ENCODE measurements at regions of chr1 and their contacts with region 1.

Region 1: GRCh38 chr1:45512641-45513054 is 9.0 kb downstream of the PRDX1 start:
- DNase-seq: no peak
- ATAC-seq: peak; percentile 86
- H3K4me3 ChIP-seq: no peak overlapping the region
- H3K27ac ChIP-seq: no peak overlapping the region
- H3K4me1 ChIP-seq: no peaks in the 10 kb centered on the region
- H3K27me3 ChIP-seq: no peaks in the 10 kb centered on the region
- CTCF ChIP-seq: peak; percentile 74 to 80 (median 75)
- EP300 ChIP-seq: no peak
- POLR2A ChIP-seq: no peak
- RAD21 ChIP-seq: peak; percentile 82

Region 2: GRCh38 chr1:45455162-45455561 is 57.5 kb before region 1 on chr1:
- CTCF ChIA-PET with region 1: no interaction called
- POLR2A ChIA-PET with region 1: no interaction called
- RAD21 ChIA-PET with region 1: no interaction called
- SMC1A ChIA-PET with region 1: no interaction called
- in situ Hi-C with region 1: no loop called
- intact Hi-C with region 1: no loop called
- DNase-seq: no peak
- ATAC-seq: no peak
- H3K4me3 ChIP-seq: no peak overlapping the region
- H3K27ac ChIP-seq: no peak overlapping the region
- H3K4me1 ChIP-seq: peaks cover 4% of the 10 kb centered on the region; the same call in 1 of the 2 replicates
- H3K27me3 ChIP-seq: no peaks in the 10 kb centered on the region
- CTCF ChIP-seq: no peak
- EP300 ChIP-seq: no peak
- POLR2A ChIP-seq: no peak
- RAD21 ChIP-seq: no peak

Region 3: DNA sequence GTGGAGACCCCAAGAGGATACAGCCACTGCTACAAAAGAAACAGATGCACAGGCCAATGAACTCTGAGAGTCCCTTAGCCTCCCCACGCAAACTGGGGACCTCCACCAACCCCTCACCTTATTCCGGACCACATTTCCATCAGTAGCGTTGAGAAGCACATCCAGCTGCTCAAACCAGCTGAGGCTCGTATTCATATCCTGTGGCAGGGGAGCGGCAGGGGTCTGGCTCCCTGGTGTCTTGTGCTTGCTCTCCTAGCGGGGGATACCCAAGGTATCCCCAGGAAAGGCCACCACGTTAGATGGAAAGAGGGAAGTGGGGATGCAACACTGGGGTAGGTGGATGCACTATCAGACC is 13.3 kb before region 1 on chr1:
- CTCF ChIA-PET with region 1: interaction called, 33 read pairs
- POLR2A ChIA-PET with region 1: interaction called, 11 read pairs
- RAD21 ChIA-PET with region 1: interaction called, 42 read pairs
- SMC1A ChIA-PET with region 1: interaction called, 32 read pairs
- in situ Hi-C with region 1: no loop called
- intact Hi-C with region 1: no loop called
- DNase-seq: no peak
- ATAC-seq: no peak; the same call in 2 of the 3 replicates
- H3K4me3 ChIP-seq: peak overlapping the region; percentile 93
- H3K27ac ChIP-seq: peak overlapping the region; percentile 54
- H3K4me1 ChIP-seq: peaks cover 15% of the 10 kb centered on the region
- H3K27me3 ChIP-seq: no peaks in the 10 kb centered on the region
- CTCF ChIP-seq: no peak
- EP300 ChIP-seq: no peak
- POLR2A ChIP-seq: no peak
- RAD21 ChIP-seq: no peak

Region 4: GRCh38 chr1:45550401-45551351 is 38.0 kb after region 1 on chr1 and contains the start of gene AKR1A1:
- CTCF ChIA-PET with region 1: interaction called, 27 read pairs
- POLR2A ChIA-PET with region 1: interaction called, 105 read pairs
- RAD21 ChIA-PET with region 1: interaction called, 13 read pairs
- SMC1A ChIA-PET with region 1: interaction called, 80 read pairs
- in situ Hi-C with region 1: no loop called
- intact Hi-C with region 1: no loop called
- DNase-seq: peak; percentile 74
- ATAC-seq: peak; percentile 94
- H3K4me3 ChIP-seq: peak within 1 kb of the TSS; percentile 87
- H3K27ac ChIP-seq: peak within 1 kb of the TSS; percentile 91
- H3K4me1 ChIP-seq: peaks cover 16% of the 10 kb centered on the region
- H3K27me3 ChIP-seq: no peaks in the 10 kb centered on the region
- CTCF ChIP-seq: no peak
- EP300 ChIP-seq: no peak
- POLR2A ChIP-seq: peak; percentile 92
- RAD21 ChIP-seq: no peak
- polyA plus RNA-seq, gene AKR1A1: 199 to 200 TPM

Region 5: GRCh38 chr1:45569962-45570581 is 57.4 kb after region 1 on chr1:
- CTCF ChIA-PET with region 1: interaction called, 212 read pairs
- POLR2A ChIA-PET with region 1: interaction called, 5 read pairs
- RAD21 ChIA-PET with region 1: interaction called, 58 read pairs
- SMC1A ChIA-PET with region 1: interaction called, 114 read pairs
- in situ Hi-C with region 1: loop called (anchors 5 kb)
- intact Hi-C with region 1: loop called (anchors 1 kb)
- DNase-seq: no peak
- ATAC-seq: peak; percentile 97
- H3K4me3 ChIP-seq: no peak overlapping the region
- H3K27ac ChIP-seq: no peak overlapping the region
- H3K4me1 ChIP-seq: no peaks in the 10 kb centered on the region
- H3K27me3 ChIP-seq: no peaks in the 10 kb centered on the region
- CTCF ChIP-seq: peak; percentile 97 to 99 (median 98); a peak in 5 of 6 replicates
- EP300 ChIP-seq: no peak
- POLR2A ChIP-seq: 0 out of 2 replicates have a peak, but pooled peaks have one; percentile 14
- RAD21 ChIP-seq: peak; percentile 95

Region 6: DNA sequence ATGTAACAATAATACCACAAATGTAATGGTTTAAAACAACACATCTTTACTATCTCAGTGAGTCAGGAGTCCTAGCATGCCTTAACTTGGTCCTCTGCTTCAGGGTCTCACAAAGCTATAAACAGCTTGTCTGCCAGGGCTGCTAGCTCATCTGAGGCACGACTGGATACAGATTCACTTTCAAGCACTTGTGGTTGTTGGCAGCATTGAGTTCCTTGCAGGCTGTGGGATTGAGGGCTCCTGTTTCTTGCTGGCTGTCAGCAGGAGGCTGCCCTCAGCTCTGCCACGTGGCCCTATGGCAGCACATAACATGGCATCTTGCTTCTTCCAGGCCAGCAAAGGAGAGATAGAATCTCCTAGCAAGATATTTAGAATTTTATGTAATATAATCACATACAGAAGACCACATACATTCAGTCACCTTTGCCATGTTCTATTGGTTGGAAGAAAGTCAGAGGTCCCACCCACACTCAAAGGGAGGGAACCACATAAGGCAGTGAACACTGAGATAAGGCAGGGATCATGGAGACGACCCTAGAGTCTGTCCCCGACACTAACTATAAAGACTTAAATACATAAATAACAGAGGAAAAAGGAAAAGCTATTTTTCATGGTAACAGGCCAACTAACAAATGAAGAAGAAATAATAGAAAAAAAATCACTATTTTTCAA is 256.7 kb after region 1 on chr1:
- CTCF ChIA-PET with region 1: no interaction called
- POLR2A ChIA-PET with region 1: no interaction called
- RAD21 ChIA-PET with region 1: no interaction called
- SMC1A ChIA-PET with region 1: no interaction called
- in situ Hi-C with region 1: no loop called
- intact Hi-C with region 1: no loop called
- DNase-seq: no peak
- ATAC-seq: peak; percentile 20; the same call in 2 of the 3 replicates
- H3K4me3 ChIP-seq: no peak overlapping the region
- H3K27ac ChIP-seq: no peak overlapping the region
- H3K4me1 ChIP-seq: no peaks in the 10 kb centered on the region
- H3K27me3 ChIP-seq: no peaks in the 10 kb centered on the region
- CTCF ChIP-seq: no peak
- EP300 ChIP-seq: no peak
- POLR2A ChIP-seq: no peak
- RAD21 ChIP-seq: no peak

Region 7: GRCh38 chr1:45884700-45885099 is 372.1 kb after region 1 on chr1:
- CTCF ChIA-PET with region 1: no interaction called
- POLR2A ChIA-PET with region 1: no interaction called
- RAD21 ChIA-PET with region 1: no interaction called
- SMC1A ChIA-PET with region 1: no interaction called
- in situ Hi-C with region 1: no loop called
- intact Hi-C with region 1: loop called (anchors 10 kb)
- DNase-seq: no peak
- ATAC-seq: no peak
- H3K4me3 ChIP-seq: no peak overlapping the region
- H3K27ac ChIP-seq: no peak overlapping the region
- H3K4me1 ChIP-seq: 0 out of 2 replicates have a peak, but pooled peaks cover 3% of the 10 kb centered on the region
- H3K27me3 ChIP-seq: no peaks in the 10 kb centered on the region
- CTCF ChIP-seq: no peak
- EP300 ChIP-seq: no peak
- POLR2A ChIP-seq: no peak
- RAD21 ChIP-seq: no peak

Measured in GM12878 (cell line).